K562 (cell line): ENCODE measurements at regions of chr10 and their contacts with region 1.

Region 1: DNA sequence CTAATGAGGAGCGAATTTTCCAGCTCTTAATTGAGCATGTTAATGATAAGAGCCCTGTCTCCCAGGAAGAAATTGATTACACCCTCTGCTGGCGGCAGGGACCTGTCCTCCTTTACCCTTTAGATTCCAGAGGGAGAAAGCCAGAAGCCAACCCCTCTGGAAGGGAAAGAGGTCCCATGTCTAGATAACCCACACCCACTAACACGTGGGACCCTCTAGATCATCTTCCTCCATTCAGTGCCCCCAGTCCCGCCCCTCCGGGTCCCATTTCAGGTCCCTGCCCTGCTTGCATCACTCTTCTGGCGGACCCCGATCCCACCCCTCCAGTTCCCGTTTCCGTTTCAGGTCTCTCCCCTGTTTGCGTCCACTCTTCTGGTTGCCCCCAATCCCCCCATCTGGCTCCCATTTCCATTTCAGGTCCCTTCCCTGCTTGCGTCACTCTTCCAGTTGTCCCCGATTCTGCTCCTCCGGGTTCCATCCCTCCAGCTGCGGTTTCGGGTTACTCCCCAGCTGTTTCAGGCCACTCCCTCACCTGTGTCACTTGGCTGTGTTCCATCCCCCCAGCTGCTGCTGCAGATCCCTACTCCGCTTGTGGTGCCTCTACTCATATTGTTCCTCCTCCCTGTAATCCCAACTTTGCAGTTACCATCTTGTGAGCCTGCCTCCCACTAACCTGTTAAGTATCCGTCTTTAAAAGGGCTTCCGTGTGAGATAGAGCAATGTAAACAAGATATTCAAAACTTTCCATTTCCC is 202.4 kb downstream of the SH2D4B start:
- DNase-seq: peak; percentile 38 to 85 (median 64)
- ATAC-seq: peak; percentile 85
- H3K4me3 ChIP-seq: peak overlapping the region; percentile 3; the same call in 1 of the 2 replicates
- H3K27ac ChIP-seq: no peak overlapping the region
- H3K4me1 ChIP-seq: peaks cover 11 to 28% of the 10 kb centered on the region in 2 experiments
- H3K27me3 ChIP-seq: no peaks in the 10 kb centered on the region
- CTCF ChIP-seq: no peak
- EP300 ChIP-seq: 0 out of 2 replicates have a peak, but pooled peaks have one; percentile 18
- POLR2A ChIP-seq: no peak
- RAD21 ChIP-seq: no peak

Region 2: GRCh38 chr10:80751940-80752339 is 11.8 kb after region 1 on chr10:
- CTCF ChIA-PET with region 1: no interaction called
- POLR2A ChIA-PET with region 1: no interaction called
- in situ Hi-C with region 1: no loop called
- intact Hi-C with region 1: no loop called
- DNase-seq: peak in 2 of 4 experiments; percentile 59 to 62
- ATAC-seq: peak; percentile 64
- H3K4me3 ChIP-seq: no peak overlapping the region
- H3K27ac ChIP-seq: peak overlapping the region; percentile 20; the same call in 2 of the 3 replicates
- H3K4me1 ChIP-seq: peaks cover 0 to 16% of the 10 kb centered on the region in 2 experiments; a peak in 3 of 5 replicates
- H3K27me3 ChIP-seq: no peaks in the 10 kb centered on the region
- CTCF ChIP-seq: no peak
- EP300 ChIP-seq: no peak; the same call in 1 of the 2 replicates
- POLR2A ChIP-seq: no peak
- RAD21 ChIP-seq: no peak

Region 3: DNA sequence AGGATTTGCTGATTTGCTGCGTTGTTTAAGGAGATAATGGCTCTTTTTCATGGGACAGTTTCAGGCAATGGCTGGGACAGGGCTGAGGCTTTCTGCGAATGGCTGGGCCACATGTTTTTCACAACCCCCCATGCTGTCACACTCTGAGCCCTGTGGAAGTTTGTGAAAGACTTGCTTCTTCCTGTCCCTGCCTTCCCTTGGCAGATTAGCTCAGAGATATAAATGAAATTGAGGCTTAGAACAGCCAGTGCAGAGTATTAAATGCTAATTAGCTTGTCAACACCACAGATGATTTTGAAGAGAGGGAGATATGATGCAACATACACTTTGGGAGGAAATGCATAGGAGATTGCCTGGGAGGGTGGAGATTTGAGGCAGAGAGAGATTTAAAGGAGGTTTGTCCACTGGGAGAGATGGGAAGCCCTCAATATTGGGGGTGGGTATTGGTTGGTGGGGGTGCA is 29.6 kb after region 1 on chr10:
- CTCF ChIA-PET with region 1: no interaction called
- POLR2A ChIA-PET with region 1: no interaction called
- in situ Hi-C with region 1: no loop called
- intact Hi-C with region 1: loop called (anchors 2 kb)
- DNase-seq: peak in 2 of 4 experiments; percentile 41 to 57
- ATAC-seq: peak; percentile 61
- H3K4me3 ChIP-seq: no peak overlapping the region
- H3K27ac ChIP-seq: peak overlapping the region; percentile 51
- H3K4me1 ChIP-seq: peaks cover 19 to 52% of the 10 kb centered on the region in 2 experiments
- H3K27me3 ChIP-seq: no peaks in the 10 kb centered on the region
- CTCF ChIP-seq: no peak
- EP300 ChIP-seq: peak; percentile 74
- POLR2A ChIP-seq: no peak
- RAD21 ChIP-seq: peak in 1 of 2 experiments; percentile 16; a peak in 2 of 4 replicates